Activated CD4-positive, alpha-beta memory T cell treated with anti-CD3 and anti-CD28 coated beads, Interleukin-2, amount 10 ng/mL, durations not matched to agents 7 days and 5 days (primary cell): ENCODE measurements at regions of chr9 and their contacts with region 1.

Region 1: DNA sequence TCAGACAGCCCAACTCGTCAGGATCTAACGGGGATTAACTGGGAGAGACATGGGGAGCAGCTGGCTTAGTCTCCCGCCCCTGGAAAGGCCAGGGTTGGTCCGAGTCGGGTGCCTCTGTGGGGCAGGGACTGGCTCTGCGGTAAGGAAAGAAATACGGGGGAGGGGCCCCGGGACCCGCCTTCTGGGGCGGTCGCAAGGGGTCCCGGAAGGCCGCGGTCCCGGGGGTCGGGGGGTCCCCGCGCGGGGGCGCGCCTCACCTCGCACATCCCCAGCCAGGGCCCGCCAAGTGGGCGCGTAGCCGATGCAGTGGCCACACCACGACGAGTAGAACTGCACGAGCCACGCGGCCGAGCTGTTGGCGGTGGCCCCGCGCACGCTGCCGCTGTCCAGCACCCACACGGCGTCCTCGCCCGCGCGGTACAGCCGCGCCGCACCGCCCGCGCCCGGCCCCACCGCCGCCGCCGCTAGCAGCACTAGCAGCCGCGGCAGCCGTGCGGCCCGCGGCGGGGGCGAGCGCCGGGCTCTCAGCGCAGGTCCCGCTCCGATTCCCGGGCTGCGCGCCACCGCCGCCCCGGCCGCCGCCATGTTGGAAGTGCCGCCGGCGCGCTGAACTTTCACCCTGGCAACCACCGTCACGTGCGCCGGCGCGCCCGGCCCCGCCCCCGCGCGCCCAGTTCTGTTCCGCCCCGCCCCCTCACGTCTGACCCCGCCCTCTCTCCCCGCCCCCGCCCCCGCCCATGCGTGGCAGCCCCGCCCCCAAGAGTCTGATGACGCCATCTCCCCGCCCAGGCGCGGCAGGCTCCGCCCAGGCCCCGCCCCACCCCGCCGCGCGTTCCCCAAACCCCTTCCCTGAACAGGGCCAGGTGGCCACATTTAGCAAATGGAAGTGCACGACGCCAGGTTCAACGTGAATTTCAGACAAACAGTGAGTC is at the start of gene QSOX2:
- DNase-seq: peak; percentile 87
- H3K4me3 Mint-ChIP-seq: peak within 1 kb of the TSS; percentile 91
- H3K27ac Mint-ChIP-seq: peak within 1 kb of the TSS; percentile 84
- H3K4me1 Mint-ChIP-seq: peaks cover 31% of the 10 kb centered on the region
- H3K27me3 Mint-ChIP-seq: peaks cover 4% of the 10 kb centered on the region
- total RNA-seq, gene QSOX2: 12.4 to 13.4 TPM

Region 2: GRCh38 chr9:136267261-136268111 is 22.0 kb after region 1 on chr9:
- CTCF ChIA-PET with region 1: no interaction called
- POLR2A ChIA-PET with region 1: interaction called, 11 read pairs
- DNase-seq: peak; percentile 90
- H3K4me3 Mint-ChIP-seq: peak overlapping the region; percentile 78
- H3K27ac Mint-ChIP-seq: peak overlapping the region; percentile 71
- H3K4me1 Mint-ChIP-seq: peaks cover 9% of the 10 kb centered on the region
- H3K27me3 Mint-ChIP-seq: peaks cover 11% of the 10 kb centered on the region

Region 3: DNA sequence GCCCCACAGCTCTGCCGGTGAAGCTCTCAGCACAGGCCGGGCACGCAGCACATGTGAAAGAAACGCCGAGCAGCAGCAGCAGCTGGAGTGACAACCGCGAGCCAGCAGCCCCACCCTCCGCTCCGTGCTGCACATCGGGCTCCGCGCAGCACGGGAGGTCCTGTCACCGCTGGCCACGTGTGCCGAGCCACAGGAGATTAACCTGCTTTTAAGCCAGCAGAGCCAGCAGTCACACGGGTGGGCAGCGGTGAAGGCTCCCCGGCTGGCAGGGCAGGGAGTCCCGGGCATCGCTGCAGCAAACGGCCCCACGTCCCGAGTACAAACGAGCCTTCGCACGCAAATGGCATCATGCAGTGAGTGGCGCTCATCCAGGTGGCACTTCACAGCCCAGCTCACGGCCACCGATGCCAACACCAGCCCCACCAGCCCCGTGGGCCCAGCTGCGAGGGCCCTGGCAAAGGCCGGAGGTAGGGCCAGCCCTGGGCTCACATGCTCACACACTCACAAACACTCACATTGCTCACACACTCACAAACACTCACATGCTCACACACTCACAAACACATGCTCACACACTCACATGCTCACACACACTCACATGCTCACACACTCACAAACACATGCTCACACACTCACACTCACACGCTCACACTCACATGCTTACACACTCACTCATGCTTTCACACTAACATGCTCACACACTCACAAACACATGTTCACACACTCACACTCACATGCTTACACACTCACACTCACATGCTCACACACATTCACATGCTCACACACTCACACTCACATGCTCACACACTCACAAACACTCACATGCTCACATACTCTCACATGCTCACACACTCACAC is 47.3 kb after region 1 on chr9:
- CTCF ChIA-PET with region 1: no interaction called
- POLR2A ChIA-PET with region 1: no interaction called
- DNase-seq: no peak
- H3K4me3 Mint-ChIP-seq: no peak overlapping the region
- H3K27ac Mint-ChIP-seq: no peak overlapping the region
- H3K4me1 Mint-ChIP-seq: no peaks in the 10 kb centered on the region
- H3K27me3 Mint-ChIP-seq: no peaks in the 10 kb centered on the region